ENCODE measurements at regions of chr4 and their contacts with region 1.

Region 1: DNA sequence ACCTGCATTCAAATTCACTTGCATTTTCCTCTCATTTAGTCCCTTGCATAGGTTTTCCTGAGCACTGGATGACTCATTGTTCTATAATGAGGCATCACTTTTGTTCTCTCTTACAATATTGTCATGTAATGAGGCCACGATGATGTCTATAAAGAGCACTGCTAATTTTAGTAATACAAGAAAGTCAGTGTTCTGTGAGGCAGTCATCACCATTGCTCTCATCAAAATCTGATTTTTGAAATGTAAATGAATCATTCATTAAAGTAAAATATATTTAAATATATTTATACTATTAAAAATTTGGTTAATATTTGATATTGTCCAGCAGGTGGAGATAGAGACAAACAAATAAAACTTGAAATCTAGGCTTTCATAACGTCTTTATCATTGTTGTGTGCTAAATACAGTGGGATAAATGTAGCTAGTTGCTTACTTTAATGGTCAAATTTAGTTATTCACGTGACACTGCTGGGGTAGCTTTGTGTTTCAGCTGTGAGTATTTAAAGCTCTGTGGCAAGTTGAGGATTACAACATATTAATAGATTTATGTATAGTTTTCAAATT is 15.4 kb downstream of the HMGB2 start:
- DNase-seq: no peak
- ATAC-seq: no peak
- H3K4me3 ChIP-seq: no peak overlapping the region
- H3K4me1 ChIP-seq: no peaks in the 10 kb centered on the region
- CTCF ChIP-seq: no peak

Region 2: DNA sequence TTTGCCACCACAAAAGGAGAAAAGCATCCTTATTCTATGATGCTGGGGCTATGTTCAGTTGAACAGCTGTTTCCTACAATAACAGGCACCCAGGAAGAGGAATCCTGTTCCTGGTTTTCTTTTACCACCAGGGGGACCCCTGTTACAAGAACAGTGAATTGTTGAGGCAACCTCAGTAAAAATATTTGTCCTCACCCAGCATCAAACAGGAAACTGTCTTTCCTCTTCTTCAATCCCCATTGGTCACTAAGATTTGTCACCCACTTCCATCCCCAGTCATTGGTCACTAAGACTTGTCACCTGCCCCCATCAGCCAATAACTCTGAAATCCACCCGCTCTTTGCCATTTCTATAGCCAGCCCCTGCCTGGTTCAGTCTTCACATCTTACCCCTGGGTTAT is 293.6 kb before region 1 on chr4:
- intact Hi-C with region 1: no loop called
- DNase-seq: peak in 1 of 3 donors; percentile 89
- ATAC-seq: peak; percentile 90
- H3K4me3 ChIP-seq: no peak overlapping the region
- H3K4me1 ChIP-seq: no peaks in the 10 kb centered on the region
- CTCF ChIP-seq: no peak

Region 3: DNA sequence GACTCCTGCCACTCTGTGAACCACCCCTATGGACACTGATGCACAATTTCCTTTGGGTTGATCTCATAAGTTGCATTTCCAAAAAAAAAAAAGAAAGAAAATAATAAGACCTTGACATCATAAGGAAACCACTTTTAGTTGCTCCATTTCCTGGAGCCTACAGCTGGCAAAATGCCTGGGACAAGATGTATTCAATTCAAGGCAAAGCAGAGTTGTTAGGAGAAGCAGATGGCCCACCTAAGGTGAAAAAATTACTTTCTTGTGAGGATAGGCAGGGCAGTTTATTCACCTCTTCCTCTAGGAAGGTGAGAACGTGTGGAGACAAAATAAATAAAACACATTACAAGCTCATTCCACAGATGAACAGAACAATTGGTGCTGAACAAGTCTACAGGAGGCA is 94.3 kb after region 1 on chr4:
- intact Hi-C with region 1: loop called (anchors 5 to 10 kb)
- DNase-seq: no peak
- ATAC-seq: no peak
- H3K4me3 ChIP-seq: no peak overlapping the region
- H3K4me1 ChIP-seq: no peaks in the 10 kb centered on the region
- CTCF ChIP-seq: no peak

Region 4: GRCh38 chr4:173494013-173494970 is 175.6 kb after region 1 on chr4:
- intact Hi-C with region 1: loop called in 1 of 2 experiments (anchors 10 kb)
- DNase-seq: peak in 2 of 3 donors; percentile 52 to 77
- ATAC-seq: peak; percentile 96
- H3K4me3 ChIP-seq: no peak overlapping the region
- H3K4me1 ChIP-seq: no peaks in the 10 kb centered on the region
- CTCF ChIP-seq: peak; percentile 60

Measured in mucosa of descending colon (tissue), 3 donors.